Esophagus muscularis mucosa (tissue), 4 donors: ENCODE measurements at regions of chr1 and their contacts with region 1.

Region 1: DNA sequence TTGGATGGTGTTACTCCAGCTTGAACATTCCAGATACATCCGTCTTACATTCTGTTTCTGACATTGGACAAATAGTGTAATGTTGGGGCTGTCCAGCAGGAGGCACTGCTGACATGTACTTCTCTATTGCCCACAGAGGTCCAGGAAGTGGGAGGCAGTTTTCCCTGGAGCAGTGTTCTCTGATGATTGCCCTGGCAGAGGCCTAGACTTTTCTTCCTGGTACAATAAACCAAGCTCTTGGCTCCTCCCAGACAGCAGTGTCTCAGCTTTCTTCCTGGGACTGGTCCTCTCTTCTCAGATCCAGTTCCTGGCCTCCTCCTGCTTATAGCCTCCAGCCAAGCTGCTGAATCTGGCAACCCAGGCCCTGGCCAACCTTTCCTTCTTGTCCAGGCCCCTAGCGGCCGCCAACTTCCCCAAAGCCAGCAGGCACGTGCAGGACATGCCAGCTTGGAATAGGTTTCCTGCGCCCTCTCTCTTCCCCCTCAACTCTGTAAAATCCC is 14.9 kb upstream of the IFNLR1 start:
- DNase-seq: peak; percentile 97
- H3K4me3 ChIP-seq: no peak overlapping the region
- H3K27ac ChIP-seq: peak overlapping the region in 2 of 4 donors; percentile 10 to 52
- H3K4me1 ChIP-seq: peaks cover 3 to 9% (median 5%) of the 10 kb centered on the region in 4 donors
- H3K27me3 ChIP-seq: peaks cover 0 to 25% (median 0%) of the 10 kb centered on the region in 4 donors
- CTCF ChIP-seq: peak; percentile 71 to 74 (median 73)
- EP300 ChIP-seq: no peak
- POLR2A ChIP-seq: no peak

Region 2: DNA sequence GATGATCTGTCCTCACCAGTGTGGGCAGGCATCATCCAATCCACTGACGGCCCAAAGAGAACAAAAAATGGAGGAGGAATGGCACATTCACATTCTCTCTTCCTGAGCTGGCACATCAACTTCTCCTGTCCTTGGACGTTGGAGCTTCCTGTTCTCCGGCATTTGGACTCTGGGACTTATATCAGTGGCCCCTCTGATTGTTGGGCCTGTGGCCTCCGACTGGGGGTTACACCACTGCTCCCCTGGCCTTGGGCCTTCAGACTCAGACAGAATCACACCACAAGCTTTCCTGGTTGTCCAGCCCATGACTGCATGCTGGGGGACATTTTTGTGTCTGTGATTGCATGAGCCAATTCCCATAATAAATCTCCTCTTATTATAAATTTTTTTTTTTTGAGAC is 35.0 kb before region 1 on chr1:
- intact Hi-C with region 1: no loop called
- DNase-seq: no peak
- H3K4me3 ChIP-seq: no peak overlapping the region
- H3K27ac ChIP-seq: no peak overlapping the region
- H3K4me1 ChIP-seq: no peaks in the 10 kb centered on the region
- H3K27me3 ChIP-seq: peaks cover 0 to 9% (median 0%) of the 10 kb centered on the region in 4 donors
- CTCF ChIP-seq: no peak
- EP300 ChIP-seq: no peak
- POLR2A ChIP-seq: no peak

Region 3: GRCh38 chr1:24391882-24392603 is 190.1 kb after region 1 on chr1:
- intact Hi-C with region 1: loop called (anchors 1 kb)
- DNase-seq: peak; percentile 92
- H3K4me3 ChIP-seq: peak overlapping the region; percentile 12 to 34 (median 24)
- H3K27ac ChIP-seq: peak overlapping the region; percentile 78 to 84 (median 82)
- H3K4me1 ChIP-seq: peaks cover 0 to 17% (median 15%) of the 10 kb centered on the region in 4 donors
- H3K27me3 ChIP-seq: no peaks in the 10 kb centered on the region
- CTCF ChIP-seq: peak; percentile 80 to 81 (median 81)
- EP300 ChIP-seq: no peak
- POLR2A ChIP-seq: no peak